Mammary epithelial cell (primary cell): ENCODE measurements at regions of chr4 and their contacts with region 1.

Region 1: GRCh38 chr4:123396307-123397143 is at the start of gene SPRY1:
- DNase-seq: peak; percentile 94
- H3K4me3 ChIP-seq: peak within 1 kb of the TSS; percentile 56 to 79 (median 64)
- H3K27ac ChIP-seq: peak within 1 kb of the TSS; percentile 59
- H3K4me1 ChIP-seq: peaks cover 5% of the 10 kb centered on the region
- H3K27me3 ChIP-seq: no peaks in the 10 kb centered on the region
- CTCF ChIP-seq: no peak
- total RNA-seq, gene SPRY1: 4.8 to 8.2 TPM

Region 2: GRCh38 chr4:123102897-123103471 is 293.5 kb before region 1 on chr4:
- CTCF ChIA-PET with region 1: no interaction called
- dilution Hi-C with region 1: no loop called
- in situ Hi-C with region 1: no loop called
- intact Hi-C with region 1: loop called (anchors 5 kb)
- DNase-seq: peak; percentile 40
- H3K4me3 ChIP-seq: no peak overlapping the region
- H3K27ac ChIP-seq: no peak overlapping the region
- H3K4me1 ChIP-seq: no peaks in the 10 kb centered on the region
- H3K27me3 ChIP-seq: no peaks in the 10 kb centered on the region
- CTCF ChIP-seq: peak; percentile 60 to 71

Region 3: DNA sequence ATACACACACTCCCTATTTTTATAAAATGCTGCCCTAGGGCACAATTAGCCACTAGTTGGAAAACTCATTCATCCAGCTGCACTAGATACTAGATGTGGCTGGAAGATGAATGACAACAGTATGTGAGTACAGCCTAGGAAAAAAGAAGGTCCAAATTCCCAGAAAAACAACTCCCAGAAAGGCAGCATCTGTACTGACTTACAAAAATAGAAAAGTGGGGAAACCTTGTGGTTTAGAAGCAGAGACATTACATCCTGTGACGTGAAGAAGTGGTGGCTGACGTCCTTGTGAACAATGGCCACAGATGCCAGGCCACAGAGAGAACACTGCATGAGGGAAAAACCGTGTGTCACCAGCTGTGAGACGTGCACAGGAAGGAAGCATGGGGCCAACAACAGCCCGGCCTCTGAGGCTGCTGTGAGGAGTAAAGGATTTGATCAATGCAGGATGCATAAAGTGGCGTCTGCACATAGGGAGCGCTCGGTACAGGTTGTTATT is 81.2 kb after region 1 on chr4:
- CTCF ChIA-PET with region 1: no interaction called
- dilution Hi-C with region 1: no loop called
- in situ Hi-C with region 1: no loop called
- intact Hi-C with region 1: loop called (anchors 5 kb)
- DNase-seq: no peak
- H3K4me3 ChIP-seq: no peak overlapping the region
- H3K27ac ChIP-seq: no peak overlapping the region
- H3K4me1 ChIP-seq: peaks cover 20% of the 10 kb centered on the region
- H3K27me3 ChIP-seq: no peaks in the 10 kb centered on the region
- CTCF ChIP-seq: no peak

Region 4: DNA sequence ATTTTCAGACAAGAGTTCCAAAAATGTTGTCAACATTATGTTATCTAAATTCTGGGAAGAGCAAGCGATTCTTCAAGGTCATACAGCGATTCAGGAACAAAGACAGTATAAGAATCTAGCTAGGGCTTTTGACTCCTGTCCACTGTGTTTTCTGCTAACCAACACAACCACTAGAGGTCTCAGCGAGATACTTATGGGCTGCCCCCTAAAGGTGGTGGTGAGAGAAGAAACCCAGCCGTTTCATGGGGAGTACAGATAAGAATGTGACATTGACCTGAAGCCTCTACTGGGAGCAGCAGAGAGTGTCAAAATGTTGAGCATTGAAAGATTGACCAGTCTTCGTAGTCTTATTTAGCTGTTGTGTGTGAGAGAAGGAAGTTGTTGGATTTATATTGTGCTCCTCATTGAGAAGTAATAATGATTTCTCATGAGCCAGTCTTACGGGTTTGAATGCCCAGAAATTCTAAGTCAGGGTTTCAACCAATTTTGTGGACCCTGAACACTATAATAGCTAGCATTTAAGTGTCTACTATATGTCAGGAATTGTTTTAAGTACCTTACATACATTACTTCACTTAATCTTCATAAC is 168.3 kb after region 1 on chr4:
- CTCF ChIA-PET with region 1: interaction called, 5 read pairs
- dilution Hi-C with region 1: no loop called
- in situ Hi-C with region 1: no loop called
- intact Hi-C with region 1: loop called (anchors 1 kb)
- DNase-seq: peak; percentile 72
- H3K4me3 ChIP-seq: no peak overlapping the region
- H3K27ac ChIP-seq: no peak overlapping the region
- H3K4me1 ChIP-seq: peaks cover 5% of the 10 kb centered on the region
- H3K27me3 ChIP-seq: no peaks in the 10 kb centered on the region
- CTCF ChIP-seq: peak; percentile 92 to 99

Region 5: GRCh38 chr4:123661080-123661737 is 264.7 kb after region 1 on chr4:
- CTCF ChIA-PET with region 1: no interaction called
- dilution Hi-C with region 1: no loop called
- in situ Hi-C with region 1: no loop called
- intact Hi-C with region 1: loop called (anchors 1 kb)
- DNase-seq: no peak
- H3K4me3 ChIP-seq: no peak overlapping the region
- H3K27ac ChIP-seq: no peak overlapping the region
- H3K4me1 ChIP-seq: no peaks in the 10 kb centered on the region
- H3K27me3 ChIP-seq: no peaks in the 10 kb centered on the region
- CTCF ChIP-seq: peak; percentile 60 to 64

Region 6: GRCh38 chr4:124111922-124112321 is 715.4 kb after region 1 on chr4:
- CTCF ChIA-PET with region 1: no interaction called
- dilution Hi-C with region 1: no loop called
- in situ Hi-C with region 1: loop called in 1 of 2 experiments (anchors 25 kb)
- intact Hi-C with region 1: loop called (anchors 2 kb)
- DNase-seq: peak; percentile 52
- H3K4me3 ChIP-seq: no peak overlapping the region
- H3K27ac ChIP-seq: no peak overlapping the region
- H3K4me1 ChIP-seq: no peaks in the 10 kb centered on the region
- H3K27me3 ChIP-seq: no peaks in the 10 kb centered on the region
- CTCF ChIP-seq: peak; percentile 58 to 66